ENCODE measurements at regions of chr2 and their contacts with region 1.

Region 1: DNA sequence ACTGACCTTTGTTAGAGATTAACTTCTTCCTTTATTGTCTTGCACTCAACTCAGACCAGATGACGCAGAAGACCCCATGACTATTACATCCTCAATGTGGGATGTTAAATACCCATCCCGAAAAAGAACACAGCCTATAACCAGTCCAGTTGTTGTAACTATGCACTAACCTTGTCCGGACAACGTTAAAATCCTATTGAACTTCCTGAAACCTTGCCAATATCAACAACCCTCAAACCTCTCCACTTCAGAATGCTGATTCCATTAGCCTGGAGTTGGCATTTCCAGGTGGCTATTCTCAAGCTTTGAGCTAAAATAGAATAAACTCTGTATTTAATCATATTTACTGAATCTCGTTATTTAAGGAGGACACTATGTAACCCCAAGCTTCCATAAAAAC is 13.6 kb downstream of the NMS start:
- DNase-seq: no peak
- H3K4me3 ChIP-seq: no peak overlapping the region
- H3K27ac ChIP-seq: no peak overlapping the region
- H3K4me1 ChIP-seq: no peaks in the 10 kb centered on the region
- H3K27me3 ChIP-seq: peaks cover 20% of the 10 kb centered on the region
- CTCF ChIP-seq: no peak

Region 2: DNA sequence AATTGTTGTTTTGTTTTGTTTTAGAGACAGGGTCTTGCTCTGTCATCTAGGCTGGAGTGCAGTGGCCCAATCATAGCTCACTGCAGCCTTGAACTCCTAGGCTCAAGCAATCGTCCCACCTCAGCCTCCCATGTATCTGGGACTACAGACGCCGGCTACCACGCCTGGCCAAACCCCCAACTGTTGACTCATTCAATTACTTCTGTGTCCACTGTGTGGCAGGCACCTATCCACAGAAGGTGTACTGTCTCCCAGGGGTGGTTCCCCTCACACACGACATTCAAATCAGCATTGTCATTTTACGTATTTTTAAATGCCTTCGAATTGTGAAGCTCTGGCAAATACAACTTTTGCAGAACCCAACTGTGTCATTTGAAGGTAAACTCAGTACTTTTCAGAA is 806.1 kb before region 1 on chr2:
- CTCF ChIA-PET with region 1: no interaction called
- POLR2A ChIA-PET with region 1: interaction called, 11 read pairs
- intact Hi-C with region 1: no loop called
- DNase-seq: no peak
- H3K4me3 ChIP-seq: no peak overlapping the region
- H3K27ac ChIP-seq: no peak overlapping the region
- H3K4me1 ChIP-seq: no peaks in the 10 kb centered on the region
- H3K27me3 ChIP-seq: peaks cover 2% of the 10 kb centered on the region
- CTCF ChIP-seq: no peak

Region 3: GRCh38 chr2:99754210-99754609 is 729.7 kb before region 1 on chr2:
- CTCF ChIA-PET with region 1: no interaction called
- POLR2A ChIA-PET with region 1: no interaction called
- intact Hi-C with region 1: no loop called
- DNase-seq: no peak
- H3K4me3 ChIP-seq: no peak overlapping the region
- H3K27ac ChIP-seq: no peak overlapping the region
- H3K4me1 ChIP-seq: no peaks in the 10 kb centered on the region
- H3K27me3 ChIP-seq: peaks cover 17% of the 10 kb centered on the region
- CTCF ChIP-seq: no peak

Region 4: DNA sequence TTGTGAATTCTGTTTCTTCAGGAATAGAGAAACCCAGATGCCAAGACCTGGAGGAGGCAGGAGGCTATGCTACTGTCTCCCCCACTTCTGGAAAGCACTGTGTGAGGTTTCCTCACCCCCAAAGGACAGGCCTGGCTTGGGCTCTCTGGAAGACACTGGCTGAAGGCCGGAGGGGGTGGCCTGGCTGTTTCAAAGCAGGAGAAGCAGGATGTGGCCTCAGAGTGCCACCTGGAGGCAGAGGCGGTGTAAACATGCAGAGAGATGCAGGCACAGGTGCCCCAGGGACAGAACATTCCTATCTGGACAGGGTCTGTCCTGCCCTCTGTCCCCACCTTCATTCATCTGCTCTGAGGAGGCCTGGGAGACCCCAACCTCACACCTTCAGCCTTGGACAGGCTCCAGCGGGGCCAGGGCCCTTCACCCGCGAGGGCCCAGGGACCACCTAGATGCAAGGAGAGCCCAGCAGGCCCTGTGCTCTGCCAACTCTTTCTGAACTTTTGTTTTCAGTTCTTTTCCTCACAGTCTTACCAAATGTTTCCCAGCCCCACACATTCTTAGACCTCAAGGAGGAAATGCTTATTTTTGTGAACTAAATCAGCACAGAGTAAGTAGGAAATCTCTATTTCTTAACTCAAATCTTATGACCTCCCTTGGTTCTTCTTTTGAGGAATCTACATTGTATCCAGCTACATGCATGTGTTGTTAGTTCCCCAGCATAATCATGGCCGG is 240.8 kb before region 1 on chr2:
- CTCF ChIA-PET with region 1: no interaction called
- POLR2A ChIA-PET with region 1: no interaction called
- intact Hi-C with region 1: no loop called
- DNase-seq: peak; percentile 47
- H3K4me3 ChIP-seq: no peak overlapping the region
- H3K27ac ChIP-seq: no peak overlapping the region
- H3K4me1 ChIP-seq: no peaks in the 10 kb centered on the region
- H3K27me3 ChIP-seq: no peaks in the 10 kb centered on the region
- CTCF ChIP-seq: peak; percentile 70

Region 5: GRCh38 chr2:100802066-100802465 is 318.2 kb after region 1 on chr2:
- CTCF ChIA-PET with region 1: no interaction called
- POLR2A ChIA-PET with region 1: no interaction called
- intact Hi-C with region 1: no loop called
- DNase-seq: no peak
- H3K4me3 ChIP-seq: no peak overlapping the region
- H3K27ac ChIP-seq: no peak overlapping the region
- H3K4me1 ChIP-seq: no peaks in the 10 kb centered on the region
- H3K27me3 ChIP-seq: no peaks in the 10 kb centered on the region
- CTCF ChIP-seq: no peak